ENCODE measurements at regions of chr15 and their contacts with region 1.

Region 1: DNA sequence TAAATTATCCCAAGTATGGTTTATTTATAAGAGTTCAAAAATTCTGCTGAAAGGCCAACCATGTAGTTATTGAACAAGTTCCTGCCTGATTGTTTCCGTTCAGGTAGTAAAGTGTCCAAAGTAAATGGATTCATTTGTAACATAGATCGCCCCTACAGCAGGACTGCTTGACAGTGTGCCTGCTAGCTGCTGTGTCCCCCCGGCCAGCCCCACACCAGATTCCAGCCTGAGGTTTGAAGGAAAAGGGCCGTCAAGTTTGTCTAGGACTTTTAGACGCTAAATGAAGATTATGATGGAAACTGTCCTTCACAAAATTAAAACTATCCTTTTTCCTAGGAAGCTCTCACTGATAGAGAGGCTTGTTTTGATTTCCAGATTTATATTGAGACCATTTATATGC is 62.7 kb downstream of the CYP19A1 start:
- DNase-seq: no peak
- ATAC-seq: no peak
- H3K4me3 ChIP-seq: no peak overlapping the region
- H3K27ac ChIP-seq: no peak overlapping the region
- H3K4me1 ChIP-seq: no peaks in the 10 kb centered on the region
- H3K27me3 ChIP-seq: peaks cover 8% of the 10 kb centered on the region
- CTCF ChIP-seq: no peak

Region 2: DNA sequence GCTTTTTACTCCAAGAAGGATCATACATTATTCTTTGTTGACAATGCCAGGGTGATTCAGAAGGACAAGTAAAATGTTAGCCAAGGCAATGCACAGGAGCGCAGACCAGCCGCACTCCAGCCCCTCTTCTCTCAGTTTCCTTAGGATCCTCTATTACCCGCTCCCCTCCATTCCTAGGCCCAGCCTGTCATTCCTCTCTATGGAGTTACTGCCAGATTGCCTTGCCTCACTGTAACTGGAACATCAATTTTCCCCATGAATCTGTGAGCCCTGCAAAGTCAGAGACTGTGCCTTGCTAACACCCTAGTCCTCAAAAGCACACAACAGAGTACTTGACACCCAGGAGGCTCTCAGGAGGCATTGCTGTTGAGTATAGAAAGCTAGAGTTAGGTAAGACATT is 19.5 kb after region 1 on chr15:
- CTCF ChIA-PET with region 1: no interaction called
- POLR2A ChIA-PET with region 1: interaction called, 11 read pairs
- in situ Hi-C with region 1: no loop called
- intact Hi-C with region 1: no loop called
- DNase-seq: no peak
- ATAC-seq: no peak
- H3K4me3 ChIP-seq: no peak overlapping the region
- H3K27ac ChIP-seq: no peak overlapping the region
- H3K4me1 ChIP-seq: no peaks in the 10 kb centered on the region
- H3K27me3 ChIP-seq: no peaks in the 10 kb centered on the region
- CTCF ChIP-seq: no peak

Region 3: DNA sequence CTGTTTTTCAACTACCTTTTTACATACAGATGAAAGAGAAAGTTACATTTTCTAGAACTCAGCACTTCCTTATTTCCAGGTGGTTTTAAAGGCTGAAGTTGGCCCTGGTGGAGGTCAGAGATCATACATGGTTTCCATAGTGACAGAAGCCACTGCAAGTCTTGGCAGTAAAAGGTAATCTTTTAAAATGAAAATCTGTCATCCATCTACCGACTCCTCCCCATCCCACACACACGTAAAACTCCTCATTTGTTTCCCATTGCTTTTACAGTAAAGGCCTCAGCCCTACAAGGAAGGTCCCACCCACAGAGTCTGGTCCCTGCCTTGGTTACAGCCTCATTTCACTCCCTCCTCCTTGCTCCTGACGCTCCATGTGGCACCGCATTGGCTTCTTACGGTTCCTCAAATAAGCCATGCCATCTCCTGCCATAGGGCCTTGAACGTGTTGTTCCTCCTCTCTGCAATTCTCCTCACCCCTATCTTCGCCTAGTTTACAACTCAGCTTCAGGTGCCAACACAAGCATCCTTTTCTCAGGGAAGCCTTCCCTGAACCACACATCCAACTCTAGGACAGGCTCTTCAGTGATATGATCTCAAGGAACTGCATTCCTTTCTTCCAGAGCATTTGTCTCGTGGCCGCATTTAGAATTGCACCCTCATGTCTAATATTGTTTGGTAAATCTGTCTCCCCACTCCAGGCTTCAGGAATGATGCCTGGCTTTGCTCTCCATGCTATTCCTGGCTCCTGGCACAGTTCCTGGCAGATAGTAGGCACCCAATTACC is 60.0 kb after region 1 on chr15:
- CTCF ChIA-PET with region 1: no interaction called
- POLR2A ChIA-PET with region 1: no interaction called
- in situ Hi-C with region 1: no loop called
- intact Hi-C with region 1: no loop called
- DNase-seq: no peak
- ATAC-seq: no peak
- H3K4me3 ChIP-seq: no peak overlapping the region
- H3K27ac ChIP-seq: no peak overlapping the region
- H3K4me1 ChIP-seq: no peaks in the 10 kb centered on the region
- H3K27me3 ChIP-seq: peaks cover 16% of the 10 kb centered on the region
- CTCF ChIP-seq: no peak

Measured in Panc1 (cell line).